Dendritic cell treated with granulocyte-macrophage colony-stimulating factor and Interleukin-4, amounts not matched to agents 40 ng/mL and 50 ng/mL, for 4 days (primary cell): ENCODE measurements at regions of chr2 and their contacts with region 1.

Region 1: GRCh38 chr2:42974721-42975717 is 182.6 kb upstream of the HAAO start:
- H3K4me3 Mint-ChIP-seq: peak overlapping the region; percentile 71
- H3K27ac Mint-ChIP-seq: peak overlapping the region; percentile 74
- H3K4me1 Mint-ChIP-seq: peaks cover 67% of the 10 kb centered on the region
- H3K27me3 Mint-ChIP-seq: peaks cover 7% of the 10 kb centered on the region

Region 2: DNA sequence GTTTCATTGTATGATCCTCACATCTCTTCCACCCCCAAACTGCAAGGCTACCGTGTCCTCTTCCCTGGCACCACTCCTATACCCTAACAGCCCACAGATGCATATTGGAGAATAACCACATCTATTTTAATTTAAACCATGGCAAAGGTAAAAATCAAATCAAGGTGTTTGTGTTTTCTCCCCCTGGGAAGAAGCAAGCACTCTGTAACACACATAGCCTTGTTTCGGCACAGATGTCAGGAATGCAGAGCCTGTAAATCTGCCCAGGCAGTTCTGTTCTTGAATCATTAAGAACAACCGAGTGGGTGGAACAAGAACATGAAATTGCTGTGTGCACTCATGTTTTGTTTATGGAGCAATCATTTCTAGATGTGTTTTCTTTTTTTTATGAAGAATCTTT is 607.2 kb before region 1 on chr2:
- intact Hi-C with region 1: no loop called
- H3K4me3 Mint-ChIP-seq: no peak overlapping the region
- H3K27ac Mint-ChIP-seq: no peak overlapping the region
- H3K4me1 Mint-ChIP-seq: peaks cover 5% of the 10 kb centered on the region
- H3K27me3 Mint-ChIP-seq: peaks cover 10% of the 10 kb centered on the region

Region 3: DNA sequence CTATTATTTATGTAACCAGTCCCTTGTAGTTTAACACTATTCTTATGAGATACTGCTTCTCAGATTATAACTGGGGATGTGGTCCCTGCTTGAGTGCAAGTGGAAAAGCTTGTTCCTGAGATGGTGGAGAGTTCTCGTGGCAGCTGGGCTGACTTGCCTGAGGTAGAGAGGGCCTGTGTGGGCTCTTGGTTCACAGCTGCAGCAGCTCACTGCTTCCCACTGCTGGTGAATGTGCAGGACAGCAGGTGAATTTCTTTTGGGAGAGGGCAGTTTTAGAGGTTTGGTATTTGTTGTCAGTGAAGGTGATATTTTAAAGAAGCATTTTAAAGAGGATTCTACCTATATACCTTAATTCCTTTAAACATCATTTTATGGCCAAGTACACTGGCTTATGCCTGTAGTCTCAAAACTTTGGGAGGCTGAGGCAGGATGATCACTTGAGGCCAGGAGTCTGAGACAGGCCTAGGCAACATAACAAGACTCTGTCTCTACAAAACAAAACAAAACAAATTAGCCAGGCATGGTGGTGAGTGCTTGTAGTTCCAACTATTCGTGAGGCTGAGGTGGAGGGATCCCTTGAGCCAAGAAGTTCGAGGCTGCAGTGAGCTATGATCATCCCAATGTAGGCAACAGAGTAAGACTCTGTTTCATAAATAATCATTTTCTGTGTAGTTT is 311.8 kb before region 1 on chr2:
- intact Hi-C with region 1: no loop called
- H3K4me3 Mint-ChIP-seq: no peak overlapping the region
- H3K27ac Mint-ChIP-seq: no peak overlapping the region
- H3K4me1 Mint-ChIP-seq: peaks cover 20% of the 10 kb centered on the region
- H3K27me3 Mint-ChIP-seq: no peaks in the 10 kb centered on the region

Region 4: GRCh38 chr2:42935692-42936681 is 39.0 kb before region 1 on chr2:
- intact Hi-C with region 1: no loop called
- H3K4me3 Mint-ChIP-seq: no peak overlapping the region
- H3K27ac Mint-ChIP-seq: no peak overlapping the region
- H3K4me1 Mint-ChIP-seq: peaks cover 26% of the 10 kb centered on the region
- H3K27me3 Mint-ChIP-seq: peaks cover 21% of the 10 kb centered on the region

Region 5: GRCh38 chr2:43024515-43025011 is 49.5 kb after region 1 on chr2:
- intact Hi-C with region 1: loop called (anchors 5 kb)
- H3K4me3 Mint-ChIP-seq: no peak overlapping the region
- H3K27ac Mint-ChIP-seq: no peak overlapping the region
- H3K4me1 Mint-ChIP-seq: peaks cover 72% of the 10 kb centered on the region
- H3K27me3 Mint-ChIP-seq: no peaks in the 10 kb centered on the region

Region 6: GRCh38 chr2:43288417-43289305 is 313.6 kb after region 1 on chr2:
- intact Hi-C with region 1: no loop called
- H3K4me3 Mint-ChIP-seq: no peak overlapping the region
- H3K27ac Mint-ChIP-seq: no peak overlapping the region
- H3K4me1 Mint-ChIP-seq: peaks cover 32% of the 10 kb centered on the region
- H3K27me3 Mint-ChIP-seq: peaks cover 3% of the 10 kb centered on the region